GM13977 (cell line): ENCODE measurements at regions of chr17 and their contacts with region 1.

Region 1: GRCh38 chr17:39393736-39394135 is 7.7 kb downstream of the FBXL20 start:
- DNase-seq: no peak
- CTCF ChIP-seq: peak; percentile 12

Region 2: DNA sequence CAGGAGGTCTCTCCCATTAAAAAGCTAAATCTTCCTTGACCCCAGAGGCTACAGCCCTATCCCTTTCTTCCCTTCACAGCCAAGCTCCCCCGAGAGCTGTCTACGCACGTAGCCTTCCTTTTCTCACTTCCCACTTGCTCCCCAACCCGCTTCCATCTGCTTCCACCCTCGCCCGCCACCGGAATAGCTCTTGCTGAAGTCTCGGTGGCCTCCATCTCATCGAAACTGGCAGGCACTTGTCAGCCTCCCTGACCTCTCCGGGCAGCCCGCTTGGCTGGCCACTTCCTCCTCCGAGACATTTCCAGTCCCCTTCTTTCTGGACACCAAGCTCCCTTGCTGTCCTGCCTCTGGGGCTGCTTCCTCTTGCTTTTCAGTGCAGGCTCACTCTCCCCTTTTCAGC is 708.2 kb before region 1 on chr17:
- in situ Hi-C with region 1: no loop called
- DNase-seq: no peak
- CTCF ChIP-seq: no peak

Region 3: DNA sequence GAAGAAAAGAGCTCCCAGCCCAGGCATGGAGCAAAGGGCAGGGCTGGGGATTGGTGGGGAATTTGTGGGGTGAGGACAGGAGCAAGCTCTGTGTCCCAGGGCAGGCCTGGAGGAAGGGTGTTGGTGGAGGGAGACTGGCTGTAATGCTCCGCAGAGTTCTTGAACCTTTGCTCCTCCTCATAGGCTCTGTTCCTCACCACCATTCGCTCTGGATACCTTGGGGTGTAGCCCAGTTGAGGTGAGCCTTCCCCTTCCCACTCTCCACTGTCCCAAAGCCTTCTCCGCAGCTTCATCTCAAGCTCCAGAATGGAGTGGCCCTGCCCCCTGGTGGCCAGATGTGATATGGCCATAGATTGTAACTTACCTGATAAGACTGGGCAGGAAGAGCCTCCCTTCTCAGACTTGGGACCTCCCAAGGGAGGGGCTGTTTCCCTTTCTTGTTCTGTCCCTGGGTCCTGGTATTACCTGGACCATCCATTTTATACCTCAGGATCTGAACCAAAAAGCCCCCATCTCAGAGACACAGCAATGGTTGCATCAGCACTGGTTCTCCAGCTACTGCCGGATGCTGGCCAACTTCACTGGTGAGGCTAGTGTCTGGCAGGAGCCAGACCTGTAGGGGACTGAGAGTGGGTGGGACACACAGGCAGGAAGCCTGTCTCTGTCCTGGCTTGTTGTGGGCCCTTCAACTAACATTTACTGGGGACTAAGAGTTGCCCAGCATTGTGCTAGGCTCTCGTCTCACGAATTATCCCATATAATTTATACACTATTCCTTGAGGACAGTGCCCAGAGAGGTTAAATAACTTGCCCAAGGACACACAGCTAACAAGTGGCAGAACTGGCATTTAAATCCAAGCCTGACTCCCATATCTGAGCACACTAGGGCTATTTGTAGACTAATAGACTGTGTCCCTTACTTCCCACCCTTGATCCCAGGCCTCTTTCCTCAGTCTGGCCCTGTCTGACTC is 148.9 kb before region 1 on chr17:
- in situ Hi-C with region 1: loop called (anchors 10 kb)
- DNase-seq: peak; percentile 81
- CTCF ChIP-seq: peak; percentile 94

Region 4: GRCh38 chr17:39473310-39473709 is 79.6 kb after region 1 on chr17:
- in situ Hi-C with region 1: no loop called
- DNase-seq: no peak
- CTCF ChIP-seq: no peak